Heart left ventricle (tissue), 16 donors: ENCODE measurements at regions of chr20 and their contacts with region 1.

Region 1: GRCh38 chr20:54661880-54662465 is 186.6 kb downstream of the DOK5 start:
- DNase-seq: no peak
- ATAC-seq: no peak
- H3K4me3 ChIP-seq: no peak overlapping the region
- H3K27ac ChIP-seq: no peak overlapping the region
- H3K4me1 ChIP-seq: peaks cover 0 to 4% (median 0%) of the 10 kb centered on the region in 12 donors
- H3K27me3 ChIP-seq: peaks cover 0 to 6% (median 0%) of the 10 kb centered on the region in 9 donors
- CTCF ChIP-seq: no peak
- POLR2A ChIP-seq: no peak

Region 2: DNA sequence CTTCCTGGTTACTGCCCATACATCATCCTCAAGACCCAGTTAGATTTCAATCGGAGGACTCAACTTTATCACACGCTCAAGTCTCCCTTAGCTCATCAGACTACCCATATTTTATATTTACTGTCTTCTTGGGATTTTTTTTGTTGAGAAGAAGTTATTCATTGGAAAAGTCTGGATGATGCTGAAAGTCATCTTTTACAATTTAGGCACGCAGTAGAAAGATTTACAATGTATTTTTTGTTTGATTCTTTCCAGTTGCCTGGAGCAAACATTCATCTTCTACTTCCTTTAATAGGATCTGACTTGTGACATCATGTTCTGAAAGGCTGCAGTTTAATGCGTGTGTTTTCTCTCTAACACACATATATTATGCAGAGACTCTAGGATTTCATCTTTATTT is 49.1 kb after region 1 on chr20:
- intact Hi-C with region 1: loop called in 1 of 10 experiments (anchors 5 kb)
- DNase-seq: no peak
- ATAC-seq: no peak
- H3K4me3 ChIP-seq: no peak overlapping the region
- H3K27ac ChIP-seq: no peak overlapping the region
- H3K4me1 ChIP-seq: no peaks in the 10 kb centered on the region
- H3K27me3 ChIP-seq: peaks cover 0 to 3% (median 0%) of the 10 kb centered on the region in 9 donors
- CTCF ChIP-seq: no peak
- POLR2A ChIP-seq: no peak